A549 (cell line): ENCODE measurements at regions of chr17 and their contacts with region 1.

Region 1: DNA sequence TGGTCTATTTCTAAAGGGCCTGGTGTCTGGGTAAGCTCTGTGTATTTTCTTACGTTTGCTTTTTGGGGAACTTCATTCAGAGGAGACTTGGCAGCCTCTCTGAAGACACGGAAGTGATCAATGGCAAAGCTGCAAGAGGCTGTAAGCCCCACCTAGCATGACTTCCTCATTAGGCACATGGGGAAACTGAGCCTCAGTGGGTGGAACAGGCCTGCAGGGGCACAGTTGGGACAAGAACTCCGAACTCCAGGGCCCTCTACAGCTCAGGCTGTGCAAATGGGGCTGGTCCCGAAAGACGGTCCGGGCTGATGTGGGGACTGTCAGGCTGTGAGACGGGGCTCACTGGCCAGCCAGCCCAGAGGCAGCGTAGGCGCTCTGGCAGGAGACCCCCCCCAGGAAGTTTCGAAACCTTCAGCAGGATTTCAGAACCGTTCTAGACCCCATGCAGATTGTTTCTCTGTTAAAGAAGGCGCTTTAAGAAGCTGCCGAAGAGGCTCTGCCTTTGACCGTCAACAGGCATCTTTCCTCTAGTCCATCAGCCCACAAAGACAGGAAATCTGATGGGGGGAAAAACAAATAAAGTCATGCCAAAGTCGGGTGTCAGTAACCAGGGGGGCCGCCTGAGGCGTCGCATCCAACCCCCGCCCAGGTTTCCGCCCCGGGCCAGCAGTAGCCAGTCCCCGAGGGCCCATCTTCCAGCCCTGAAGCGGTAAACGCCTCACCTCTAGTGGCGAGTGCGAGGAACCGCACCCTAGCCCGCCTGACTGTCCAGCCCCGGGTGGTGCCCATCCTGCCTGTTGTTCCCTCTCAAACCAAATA is 79.8 kb upstream of the TBC1D3K start:
- DNase-seq: peak; percentile 71 to 87
- ATAC-seq: peak; percentile 96 to 99
- H3K4me3 ChIP-seq: no peak overlapping the region
- H3K27ac ChIP-seq: peak overlapping the region in 1 of 2 experiments; percentile 24; a peak in 3 of 6 replicates
- H3K4me1 ChIP-seq: peaks cover 16% of the 10 kb centered on the region; the same call in 2 of the 3 replicates
- CTCF ChIP-seq: peak; percentile 82
- EP300 ChIP-seq: no peak
- POLR2A ChIP-seq: no peak
- RAD21 ChIP-seq: peak; percentile 90 to 93

Region 2: GRCh38 chr17:37737971-37738370 is 106.4 kb before region 1 on chr17:
- CTCF ChIA-PET with region 1: no interaction called
- POLR2A ChIA-PET with region 1: no interaction called
- DNase-seq: no peak
- ATAC-seq: no peak
- H3K4me3 ChIP-seq: no peak overlapping the region
- H3K27ac ChIP-seq: peak overlapping the region; percentile 11 to 48; a peak in 5 of 6 replicates
- H3K4me1 ChIP-seq: peaks cover 44% of the 10 kb centered on the region
- CTCF ChIP-seq: no peak
- EP300 ChIP-seq: no peak
- POLR2A ChIP-seq: no peak
- RAD21 ChIP-seq: no peak

Region 3: DNA sequence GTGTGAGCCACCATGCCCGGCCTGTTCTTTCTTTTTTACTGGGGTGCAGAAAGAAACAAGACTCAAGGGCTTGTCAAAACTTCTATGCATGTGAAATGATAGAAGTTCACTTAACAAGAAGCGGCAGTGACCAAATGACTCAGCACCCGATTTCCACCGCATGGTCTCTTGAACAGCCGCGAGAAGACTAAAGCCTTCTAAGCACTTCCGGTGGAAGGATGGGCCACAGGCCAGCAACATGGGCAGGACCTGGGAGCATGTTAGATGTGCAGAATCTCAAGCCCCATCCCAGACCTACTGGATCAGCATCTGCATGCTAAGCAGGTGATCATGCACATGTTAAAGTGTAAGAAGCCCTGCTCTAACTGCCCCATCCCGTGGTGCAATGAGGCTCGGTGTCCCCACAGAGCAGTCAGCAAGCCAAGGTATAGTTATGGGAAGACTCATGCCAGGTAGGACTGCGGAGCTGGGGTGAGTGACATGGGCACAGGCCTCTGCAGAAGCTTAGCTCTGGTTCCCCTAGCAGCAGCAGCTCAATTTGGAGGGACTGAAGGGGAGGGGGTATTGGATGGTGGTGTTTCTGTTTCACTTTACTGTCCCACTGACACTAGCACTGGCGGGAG is 11.0 kb before region 1 on chr17:
- CTCF ChIA-PET with region 1: interaction called, 39 read pairs
- POLR2A ChIA-PET with region 1: no interaction called
- DNase-seq: no peak
- ATAC-seq: no peak
- H3K4me3 ChIP-seq: no peak overlapping the region
- H3K27ac ChIP-seq: no peak overlapping the region
- H3K4me1 ChIP-seq: peaks cover 9% of the 10 kb centered on the region
- CTCF ChIP-seq: no peak
- EP300 ChIP-seq: no peak
- POLR2A ChIP-seq: no peak
- RAD21 ChIP-seq: no peak